Adrenal gland (tissue), 19 donors: ENCODE measurements at regions of chr2 and their contacts with region 1.

Region 1: DNA sequence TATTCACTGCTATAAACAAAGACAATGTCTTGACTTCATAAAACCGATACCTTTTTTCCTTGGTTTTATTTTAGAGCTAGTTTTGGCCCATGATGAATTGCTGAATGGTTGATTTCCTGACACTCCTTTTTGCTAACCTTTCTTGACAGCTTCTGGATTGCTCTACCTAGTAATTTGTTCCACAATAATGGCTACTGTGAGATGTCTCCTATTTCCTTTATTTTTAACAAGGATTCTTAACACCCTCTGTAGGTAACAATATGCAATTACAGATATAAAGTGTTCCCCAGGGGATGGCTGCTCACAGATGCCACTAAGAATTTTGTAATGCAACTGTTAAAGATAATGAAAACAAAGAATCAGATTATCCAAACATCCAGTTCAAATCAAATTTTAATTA is 100.8 kb upstream of the ATP5MC3 start:
- DNase-seq: no peak
- H3K4me3 ChIP-seq: no peak overlapping the region
- H3K27ac ChIP-seq: no peak overlapping the region
- H3K4me1 ChIP-seq: no peaks in the 10 kb centered on the region
- H3K27me3 ChIP-seq: no peaks in the 10 kb centered on the region
- CTCF ChIP-seq: peak; percentile 28 to 64 (median 54)
- POLR2A ChIP-seq: no peak

Region 2: GRCh38 chr2:175030380-175031271 is 251.7 kb before region 1 on chr2:
- intact Hi-C with region 1: loop called in 1 of 2 experiments (anchors 10 kb)
- DNase-seq: peak; percentile 10 to 63 (median 32)
- H3K4me3 ChIP-seq: no peak overlapping the region
- H3K27ac ChIP-seq: no peak overlapping the region
- H3K4me1 ChIP-seq: no peaks in the 10 kb centered on the region
- H3K27me3 ChIP-seq: no peaks in the 10 kb centered on the region
- CTCF ChIP-seq: peak in 3 of 6 experiments; percentile 27 to 37 (median 31)
- POLR2A ChIP-seq: no peak

Region 3: DNA sequence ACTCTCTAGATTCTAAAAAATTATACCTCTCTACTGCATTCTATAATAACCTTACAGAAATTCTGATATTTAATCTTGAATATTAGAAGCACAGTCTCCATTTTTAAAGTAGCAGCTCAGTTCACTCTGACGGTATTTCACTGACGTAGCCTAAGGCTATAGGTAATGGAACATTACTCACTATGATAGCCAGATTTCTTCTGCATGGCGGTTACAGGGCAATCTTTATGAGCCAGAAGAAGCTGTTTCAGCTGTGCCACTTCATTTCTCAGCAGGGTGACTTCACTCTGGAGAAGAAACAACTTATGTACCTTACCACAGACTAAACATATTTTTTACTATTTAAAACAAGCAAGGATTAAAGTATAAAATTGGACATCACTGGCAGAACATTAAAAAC is 201.8 kb before region 1 on chr2:
- intact Hi-C with region 1: no loop called
- DNase-seq: no peak
- H3K4me3 ChIP-seq: no peak overlapping the region
- H3K27ac ChIP-seq: no peak overlapping the region
- H3K4me1 ChIP-seq: no peaks in the 10 kb centered on the region
- H3K27me3 ChIP-seq: no peaks in the 10 kb centered on the region
- CTCF ChIP-seq: no peak
- POLR2A ChIP-seq: no peak

Region 4: DNA sequence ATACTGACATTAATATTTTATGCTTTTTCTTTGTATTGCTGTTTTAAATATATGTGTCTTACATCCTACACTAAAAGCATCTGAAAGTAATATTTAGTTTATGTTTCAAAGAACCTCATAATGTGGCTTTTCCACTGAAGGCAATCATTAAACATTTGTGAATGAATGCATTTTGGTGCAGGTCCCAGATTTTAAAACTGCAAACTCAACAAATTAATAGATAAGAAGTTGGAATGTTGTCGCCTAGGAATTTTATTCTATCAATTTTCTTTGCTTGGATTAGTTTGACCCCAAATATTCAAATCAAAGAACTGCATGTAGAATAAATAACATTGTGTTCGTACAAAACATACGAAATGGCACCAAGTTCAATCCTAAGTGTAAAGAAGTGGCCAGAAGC is 159.0 kb before region 1 on chr2:
- intact Hi-C with region 1: no loop called
- DNase-seq: no peak
- H3K4me3 ChIP-seq: no peak overlapping the region
- H3K27ac ChIP-seq: no peak overlapping the region
- H3K4me1 ChIP-seq: peaks cover 0 to 5% of the 10 kb centered on the region in 2 donors
- H3K27me3 ChIP-seq: no peaks in the 10 kb centered on the region
- CTCF ChIP-seq: no peak
- POLR2A ChIP-seq: no peak